ENCODE measurements at regions of chr17 and their contacts with region 1.

Region 1: GRCh38 chr17:34980681-34981537 is 597 bp downstream of the LIG3 start:
- DNase-seq: peak; percentile 89
- ATAC-seq: peak; percentile 95

Region 2: DNA sequence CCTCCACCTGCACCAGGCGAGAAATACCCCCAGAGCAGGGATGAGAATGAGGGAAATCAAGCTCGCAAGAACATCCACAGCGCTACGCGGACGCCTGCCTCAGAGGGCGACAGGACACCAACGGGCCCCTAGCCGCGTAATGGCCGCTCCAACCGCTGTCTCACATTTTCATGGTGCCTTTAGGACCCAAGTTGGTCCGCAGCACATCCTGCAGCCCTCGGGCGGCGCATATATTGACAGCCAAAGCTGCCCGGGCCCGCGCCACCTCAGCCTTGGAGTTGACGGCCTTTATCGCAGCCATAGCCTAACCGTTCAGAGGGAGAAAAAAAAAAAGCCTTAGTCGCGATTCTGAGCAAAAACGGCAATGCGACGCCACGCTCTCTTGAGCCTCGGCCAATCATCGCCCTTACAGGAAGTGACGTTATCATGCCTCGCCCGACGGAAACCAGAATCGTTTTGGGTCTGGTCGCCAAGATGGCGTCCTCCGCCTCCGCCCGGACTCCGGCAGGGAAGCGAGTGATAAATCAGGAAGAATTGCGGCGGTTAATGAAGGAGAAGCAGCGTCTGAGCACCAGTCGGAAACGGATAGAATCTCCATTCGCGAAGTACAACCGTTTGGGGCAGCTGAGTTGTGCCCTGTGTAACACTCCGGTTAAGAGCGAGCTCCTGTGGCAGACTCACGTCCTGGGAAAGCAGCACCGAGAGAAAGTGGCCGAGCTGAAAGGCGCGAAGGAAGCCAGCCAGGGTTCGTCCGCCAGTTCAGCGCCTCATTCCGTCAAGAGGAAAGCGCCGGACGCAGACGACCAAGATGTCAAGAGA is 19.6 kb before region 1 on chr17 and contains the starts of genes CCT6B and ZNF830:
- intact Hi-C with region 1: loop called (anchors 1 kb)
- DNase-seq: peak; percentile 93
- ATAC-seq: peak; percentile 95
- total RNA-seq, gene CCT6B: 1.4 TPM
- total RNA-seq, gene ZNF830: 9.8 TPM

Region 3: GRCh38 chr17:35088881-35089585 is 108.1 kb after region 1 on chr17:
- intact Hi-C with region 1: loop called (anchors 5 kb)
- DNase-seq: peak; percentile 96
- ATAC-seq: peak; percentile 97

Region 4: DNA sequence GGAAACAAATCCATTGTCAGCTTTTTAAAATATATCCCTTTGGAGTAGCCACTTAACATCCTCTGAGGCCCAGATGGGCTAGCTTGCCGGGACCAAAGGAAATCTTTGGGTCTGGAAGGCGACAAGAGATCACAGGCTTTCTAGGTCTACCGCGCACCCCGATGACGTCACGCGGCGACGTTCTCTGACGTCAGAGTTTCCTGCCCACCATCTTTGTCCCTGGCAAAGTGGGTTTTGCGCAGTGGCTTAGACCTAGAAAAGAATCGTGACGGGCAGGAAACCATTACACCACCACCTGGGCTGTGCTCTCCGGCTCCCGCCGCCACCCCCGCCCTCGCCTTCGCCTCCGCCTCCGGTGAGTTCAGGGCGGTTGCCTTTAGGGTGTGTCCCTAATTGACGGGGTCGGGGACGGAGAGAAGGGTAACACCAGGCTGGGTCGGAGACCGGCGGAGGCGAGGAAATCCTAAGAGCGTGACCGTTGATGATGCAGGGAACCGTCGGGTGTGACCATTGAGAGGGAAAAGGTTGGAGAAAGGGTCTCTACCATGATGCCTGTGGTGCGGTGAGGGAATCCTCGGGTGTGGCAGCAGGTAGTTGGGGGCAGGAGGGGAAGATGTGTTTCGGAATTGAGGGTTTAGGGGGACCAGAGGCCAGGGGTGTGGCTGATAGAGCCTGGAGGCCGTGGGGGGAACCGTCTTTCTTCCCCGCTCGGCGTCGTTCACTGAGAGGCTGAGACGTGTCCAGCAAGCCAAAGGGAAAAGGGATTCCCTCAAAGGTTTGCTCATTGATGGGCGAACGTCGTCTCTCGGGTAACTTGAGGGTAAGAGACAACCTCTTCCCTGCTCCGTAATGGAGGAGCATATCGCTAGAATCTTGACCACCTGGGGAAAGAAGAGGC is 606.4 kb after region 1 on chr17 and contains the start of gene AP2B1:
- intact Hi-C with region 1: loop called (anchors 10 kb)
- DNase-seq: peak; percentile 95
- ATAC-seq: peak; percentile 96
- total RNA-seq, gene AP2B1: 117 TPM

Measured in Right ventricle myocardium inferior (tissue), 1 donor.